Astrocyte of the cerebellum (primary cell): ENCODE measurements at regions of chr20 and their contacts with region 1.

Region 1: GRCh38 chr20:37711987-37712964 is 18.4 kb downstream of the CTNNBL1 start:
- DNase-seq: no peak
- H3K4me3 ChIP-seq: no peak overlapping the region
- CTCF ChIP-seq: no peak

Region 2: GRCh38 chr20:37630166-37630565 is 82.1 kb before region 1 on chr20:
- in situ Hi-C with region 1: loop called (anchors 5 kb)
- DNase-seq: no peak
- H3K4me3 ChIP-seq: no peak overlapping the region
- CTCF ChIP-seq: no peak

Region 3: DNA sequence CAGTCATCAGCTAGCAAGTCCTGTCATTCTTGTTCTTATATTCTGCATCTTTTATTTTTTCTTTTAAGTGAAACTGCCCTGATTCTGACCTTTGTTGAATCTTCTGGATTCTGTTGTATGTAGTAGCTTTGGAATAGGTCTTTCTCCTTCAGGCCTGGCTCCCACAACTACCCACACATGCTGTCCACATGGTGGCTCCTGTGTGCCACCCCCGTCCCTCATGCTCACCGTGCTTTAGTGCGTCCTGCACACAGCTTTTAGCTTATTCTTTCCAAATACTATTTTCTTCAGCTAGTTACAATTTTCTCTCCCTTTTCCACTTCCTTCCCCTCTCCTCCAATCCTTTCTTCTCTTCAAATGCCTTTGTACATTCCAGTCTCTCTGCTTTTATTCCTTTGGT is 43.4 kb after region 1 on chr20:
- in situ Hi-C with region 1: no loop called
- DNase-seq: no peak
- H3K4me3 ChIP-seq: no peak overlapping the region
- CTCF ChIP-seq: no peak